K562 (cell line): ENCODE measurements at regions of chr10 and their contacts with region 1.

Region 1: DNA sequence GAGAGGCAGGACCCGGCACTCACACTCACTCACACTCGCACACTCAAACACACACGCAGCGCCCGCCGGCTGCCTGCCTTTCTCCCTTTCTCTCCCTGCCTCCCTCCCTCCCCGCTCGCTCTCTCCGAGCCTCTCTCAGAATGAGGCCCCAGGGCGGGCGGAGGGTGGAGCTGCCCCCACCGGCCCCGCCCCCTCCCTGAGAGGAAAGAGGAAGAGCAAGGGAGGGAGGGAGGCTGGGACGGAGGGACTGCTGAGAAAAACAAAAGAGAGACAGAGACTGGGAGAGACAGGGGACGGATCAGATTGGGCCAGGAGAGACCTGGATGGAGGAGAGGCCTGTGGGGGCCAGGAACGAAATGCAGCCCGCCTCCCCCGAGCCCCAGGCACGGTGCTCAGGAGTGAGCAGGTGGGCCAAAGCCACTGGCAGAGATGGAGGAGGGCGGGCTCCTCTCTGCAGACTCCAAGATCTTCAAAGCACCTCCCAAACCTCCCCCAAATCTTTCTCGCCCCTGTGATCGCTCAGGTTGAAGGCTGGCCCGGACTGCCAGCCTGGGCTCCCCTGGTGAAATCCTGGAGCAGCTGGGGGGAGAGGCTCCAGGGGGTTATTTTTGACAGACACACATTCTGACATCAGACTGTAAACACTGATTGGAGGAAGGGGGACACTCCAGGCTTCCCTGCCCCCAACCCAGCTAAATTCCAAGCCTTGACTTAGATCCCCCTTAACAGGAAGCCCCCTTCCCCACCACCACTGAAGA is 5.1 kb downstream of the LDB1 start:
- DNase-seq: peak; percentile 67 to 92 (median 76)
- ATAC-seq: peak; percentile 83
- H3K4me3 ChIP-seq: peak overlapping the region; percentile 94
- H3K27ac ChIP-seq: peak overlapping the region; percentile 64
- H3K4me1 ChIP-seq: peaks cover 42 to 48% of the 10 kb centered on the region in 2 experiments
- H3K27me3 ChIP-seq: no peaks in the 10 kb centered on the region
- CTCF ChIP-seq: no peak
- EP300 ChIP-seq: no peak
- POLR2A ChIP-seq: peak; percentile 75
- RAD21 ChIP-seq: no peak

Region 2: GRCh38 chr10:102064868-102065560 is 50.0 kb before region 1 on chr10 and contains the start of gene HPS6:
- CTCF ChIA-PET with region 1: no interaction called
- POLR2A ChIA-PET with region 1: no interaction called
- in situ Hi-C with region 1: no loop called
- intact Hi-C with region 1: loop called (anchors 2 kb)
- DNase-seq: peak; percentile 88 to 90 (median 89)
- ATAC-seq: peak; percentile 97
- H3K4me3 ChIP-seq: peak within 1 kb of the TSS; percentile 92
- H3K27ac ChIP-seq: peak within 1 kb of the TSS; percentile 76
- H3K4me1 ChIP-seq: peaks cover 25 to 38% of the 10 kb centered on the region in 2 experiments; a peak in 4 of 5 replicates
- H3K27me3 ChIP-seq: no peaks in the 10 kb centered on the region
- CTCF ChIP-seq: 0 out of 6 replicates have a peak, but pooled peaks of 1 of the 3 experiments have one; percentile 1
- EP300 ChIP-seq: no peak
- POLR2A ChIP-seq: peak; percentile 70
- RAD21 ChIP-seq: no peak
- polyA plus RNA-seq, gene HPS6: 0.45 to 0.55 TPM

Region 3: DNA sequence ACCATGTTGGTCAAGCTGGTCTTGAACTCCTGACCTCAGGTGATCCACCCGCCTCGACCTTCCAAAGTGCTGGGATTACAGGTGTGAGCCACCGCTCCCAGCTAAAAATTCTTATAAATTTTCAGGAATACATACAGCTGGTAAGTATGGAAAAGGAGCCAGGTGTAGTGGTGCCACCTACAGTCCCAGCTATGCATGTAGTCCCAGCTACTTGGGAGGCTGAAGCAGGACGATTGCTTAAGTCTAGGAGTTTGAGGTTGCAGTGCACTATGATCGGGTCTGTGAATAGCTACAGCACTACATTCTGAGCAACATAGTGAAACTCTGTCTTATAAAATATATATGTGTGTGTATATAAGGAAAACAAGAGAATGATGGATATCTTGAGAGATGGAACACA is 13.9 kb before region 1 on chr10:
- CTCF ChIA-PET with region 1: no interaction called
- POLR2A ChIA-PET with region 1: interaction called, 27 read pairs
- in situ Hi-C with region 1: no loop called
- intact Hi-C with region 1: no loop called
- DNase-seq: no peak
- ATAC-seq: peak; percentile 44; the same call in 2 of the 3 replicates
- H3K4me3 ChIP-seq: no peak overlapping the region
- H3K27ac ChIP-seq: no peak overlapping the region
- H3K4me1 ChIP-seq: no peaks in the 10 kb centered on the region; a peak in 2 of 5 replicates
- H3K27me3 ChIP-seq: no peaks in the 10 kb centered on the region
- CTCF ChIP-seq: peak in 2 of 3 experiments; percentile 6 to 19; a peak in 1 of 6 replicates
- EP300 ChIP-seq: no peak
- POLR2A ChIP-seq: no peak
- RAD21 ChIP-seq: no peak

Region 4: DNA sequence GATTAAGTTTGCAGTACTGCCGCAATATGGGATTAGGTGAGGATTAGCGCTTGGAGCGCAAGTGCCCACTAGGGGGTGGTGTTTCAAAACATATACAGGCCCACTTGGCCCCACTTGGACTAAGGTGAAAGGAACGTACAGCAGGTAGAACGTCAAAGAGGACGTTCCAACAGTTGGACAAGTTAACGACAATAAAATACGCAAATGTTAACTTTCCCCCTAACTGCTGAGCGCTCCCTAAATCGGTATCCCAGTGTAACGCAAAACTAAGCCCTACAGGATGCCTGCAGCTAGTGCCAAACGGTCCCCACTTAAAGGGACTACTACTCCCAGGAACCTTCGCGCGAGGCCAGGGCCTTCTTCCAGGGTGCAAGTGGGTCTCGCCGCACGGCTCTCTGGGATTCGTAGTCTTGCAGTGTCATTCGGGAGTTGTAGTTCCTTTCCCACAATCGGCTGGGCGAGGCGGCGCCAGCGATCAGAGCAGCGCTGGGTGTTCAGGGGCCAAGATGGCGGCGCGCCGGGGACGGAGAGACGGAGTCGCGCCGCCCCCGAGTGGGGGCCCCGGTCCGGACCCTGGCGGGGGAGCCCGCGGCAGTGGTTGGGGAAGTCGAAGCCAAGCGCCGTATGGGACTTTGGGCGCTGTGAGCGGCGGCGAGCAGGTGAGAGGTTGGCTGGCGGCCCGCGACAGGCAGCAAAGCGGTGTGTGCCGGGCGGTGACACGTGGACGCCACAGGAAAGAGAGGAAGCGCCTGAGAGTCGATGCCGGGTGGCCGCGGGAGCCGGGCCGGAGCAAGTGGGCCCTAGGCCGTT is 17.7 kb after region 1 on chr10 and contains the start of gene PPRC1:
- CTCF ChIA-PET with region 1: interaction called, 3 read pairs
- POLR2A ChIA-PET with region 1: interaction called, 5 read pairs
- in situ Hi-C with region 1: no loop called
- intact Hi-C with region 1: loop called (anchors 1 kb)
- DNase-seq: peak; percentile 82 to 97 (median 86)
- ATAC-seq: peak; percentile 96
- H3K4me3 ChIP-seq: peak within 1 kb of the TSS; percentile 96
- H3K27ac ChIP-seq: peak within 1 kb of the TSS; percentile 91
- H3K4me1 ChIP-seq: peaks cover 22 to 24% of the 10 kb centered on the region in 2 experiments; a peak in 4 of 5 replicates
- H3K27me3 ChIP-seq: no peaks in the 10 kb centered on the region
- CTCF ChIP-seq: peak; percentile 80 to 91 (median 81)
- EP300 ChIP-seq: peak; percentile 24; the same call in 1 of the 2 replicates
- POLR2A ChIP-seq: peak; percentile 89
- RAD21 ChIP-seq: peak; percentile 54 to 69
- polyA plus RNA-seq, gene PPRC1: 8.5 to 9.0 TPM